ENCODE measurements at regions of chr17 and their contacts with region 1.

Region 1: DNA sequence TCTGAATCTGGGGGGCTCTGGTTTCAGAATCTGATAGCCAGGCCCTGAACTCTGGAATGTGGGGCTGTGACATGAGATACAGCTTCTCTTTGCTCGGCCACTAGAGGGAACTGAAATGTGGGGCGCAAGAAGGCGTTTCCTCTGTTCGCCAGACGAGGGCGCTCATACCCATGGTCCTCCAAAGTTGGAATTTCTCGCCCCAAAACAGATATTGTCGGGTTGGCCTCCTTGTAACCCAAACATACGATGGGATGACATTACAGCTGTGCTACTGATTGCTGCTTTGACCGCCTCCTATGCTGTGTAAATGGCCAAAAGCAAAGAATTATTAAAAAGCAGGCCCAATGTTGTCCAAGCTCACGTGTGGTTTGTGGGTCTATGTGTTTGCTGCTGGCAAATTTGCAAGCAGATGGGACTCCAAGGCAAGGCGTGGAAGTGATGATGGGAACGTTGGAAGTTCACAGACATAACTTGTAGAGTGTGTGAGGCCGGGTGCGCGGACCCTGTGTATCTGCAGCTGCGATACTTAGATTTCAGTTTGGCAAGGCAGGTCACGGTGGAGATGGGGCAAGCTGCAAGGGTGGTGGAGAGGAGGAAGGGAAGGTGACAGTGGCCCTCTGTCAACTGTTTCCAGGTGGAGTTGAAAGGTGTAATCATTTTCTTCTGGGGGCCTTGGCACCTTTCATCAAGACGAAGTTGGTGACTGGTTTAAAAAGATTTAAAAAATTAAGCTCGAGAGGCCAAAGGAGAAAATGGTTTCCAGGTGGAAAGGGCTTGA is 13.0 kb upstream of the MSI2 start:
- DNase-seq: peak; percentile 59
- ATAC-seq: peak; percentile 84
- H3K4me3 Mint-ChIP-seq: no peak overlapping the region
- H3K27ac Mint-ChIP-seq: peak overlapping the region; percentile 30
- H3K4me1 Mint-ChIP-seq: no peaks in the 10 kb centered on the region
- H3K27me3 Mint-ChIP-seq: peaks cover 6% of the 10 kb centered on the region
- CTCF ChIP-seq: peak; percentile 89

Region 2: DNA sequence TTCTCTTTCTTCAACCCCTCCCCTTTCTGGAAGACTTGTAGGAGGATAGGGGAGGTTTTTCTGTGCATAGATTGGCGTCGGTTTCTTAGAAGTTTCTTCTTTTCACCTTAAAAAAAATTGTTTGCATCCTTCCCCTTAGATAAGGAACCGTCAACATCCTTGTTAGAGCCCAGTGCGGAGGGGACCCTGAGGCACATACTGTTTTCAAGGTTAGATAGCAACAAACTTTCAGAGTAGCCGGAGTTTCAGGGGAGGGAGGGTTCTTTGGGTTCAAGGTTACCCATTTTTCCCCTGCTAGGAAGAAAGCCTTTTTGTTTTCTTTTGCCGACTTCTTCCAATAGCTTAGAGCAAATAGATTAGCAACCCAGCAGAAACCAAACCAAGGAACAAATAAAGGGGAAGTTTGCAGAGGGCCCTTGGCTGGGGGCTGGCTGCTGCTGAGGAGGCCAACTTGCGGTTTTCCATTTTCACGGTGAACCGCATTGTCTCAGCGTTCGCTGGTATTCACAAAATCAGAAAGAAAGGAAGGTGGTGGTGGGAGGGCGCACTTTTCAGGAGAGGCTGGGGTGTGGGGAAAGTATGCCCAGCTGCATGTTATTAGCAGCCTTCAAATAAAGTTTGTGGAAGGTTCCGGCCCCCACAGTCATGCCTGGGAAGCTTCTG is 41.8 kb after region 1 on chr17:
- CTCF ChIA-PET with region 1: interaction called, 4 read pairs
- POLR2A ChIA-PET with region 1: no interaction called
- intact Hi-C with region 1: loop called (anchors 1 kb)
- DNase-seq: peak; percentile 38
- ATAC-seq: peak; percentile 89
- H3K4me3 Mint-ChIP-seq: peak overlapping the region; percentile 79
- H3K27ac Mint-ChIP-seq: peak overlapping the region; percentile 74
- H3K4me1 Mint-ChIP-seq: peaks cover 43% of the 10 kb centered on the region
- H3K27me3 Mint-ChIP-seq: no peaks in the 10 kb centered on the region
- CTCF ChIP-seq: no peak

Region 3: DNA sequence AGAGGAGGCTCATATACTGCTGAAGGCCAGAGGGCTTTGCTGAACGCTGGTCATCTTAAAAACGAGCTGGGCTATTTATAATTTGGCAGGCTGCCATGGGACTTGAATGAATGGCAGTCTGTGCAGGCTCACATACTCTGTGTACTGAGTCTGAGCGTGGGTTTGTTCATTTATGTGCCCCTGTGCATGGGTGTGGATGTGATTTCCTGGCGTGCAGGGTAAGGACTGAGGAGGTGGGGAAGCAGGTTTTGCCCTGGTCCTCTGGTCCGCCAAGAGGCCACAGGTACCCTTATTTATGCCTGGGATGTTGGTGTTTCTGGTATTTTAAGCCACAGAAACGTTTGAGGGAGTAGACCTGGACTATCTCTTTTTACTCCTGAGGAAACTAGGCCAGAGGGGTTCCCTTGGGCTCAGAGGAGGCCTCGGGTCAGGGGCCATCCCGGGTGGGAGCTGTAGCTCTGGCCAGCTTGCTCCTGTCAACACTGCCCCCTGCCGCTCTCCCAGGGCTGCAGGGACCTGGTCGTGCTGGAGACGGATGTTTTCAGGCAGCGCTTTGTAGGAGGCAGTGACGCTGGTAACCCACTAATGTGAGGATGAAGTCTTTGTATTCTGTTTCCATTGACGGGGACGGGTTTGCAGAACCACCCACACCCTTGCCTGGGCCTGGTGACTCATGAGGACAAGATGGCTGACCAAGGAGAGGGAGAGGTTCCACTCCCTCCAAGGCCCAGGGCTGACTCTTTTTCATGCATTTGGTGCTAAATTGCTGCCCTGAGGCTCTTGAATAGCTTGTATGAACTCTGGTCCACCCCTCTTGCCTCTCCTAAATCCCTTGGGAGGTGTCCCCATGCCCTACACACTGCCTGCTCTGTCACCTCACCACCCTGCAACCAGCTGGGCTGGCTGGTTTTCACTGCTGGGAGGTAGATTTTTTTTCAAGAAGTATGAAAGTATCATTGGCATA is 197.4 kb after region 1 on chr17:
- CTCF ChIA-PET with region 1: interaction called, 15 read pairs
- POLR2A ChIA-PET with region 1: interaction called, 3 read pairs
- intact Hi-C with region 1: loop called (anchors 5 kb)
- DNase-seq: no peak
- ATAC-seq: peak; percentile 74
- H3K4me3 Mint-ChIP-seq: peak overlapping the region; percentile 32
- H3K27ac Mint-ChIP-seq: peak overlapping the region; percentile 81
- H3K4me1 Mint-ChIP-seq: peaks cover 91% of the 10 kb centered on the region
- H3K27me3 Mint-ChIP-seq: no peaks in the 10 kb centered on the region
- CTCF ChIP-seq: no peak

Region 4: GRCh38 chr17:57671667-57672632 is 428.6 kb after region 1 on chr17:
- CTCF ChIA-PET with region 1: interaction called, 114 read pairs
- POLR2A ChIA-PET with region 1: interaction called, 7 read pairs
- intact Hi-C with region 1: loop called (anchors 1 kb)
- DNase-seq: peak; percentile 56
- ATAC-seq: peak; percentile 91
- H3K4me3 Mint-ChIP-seq: no peak overlapping the region
- H3K27ac Mint-ChIP-seq: no peak overlapping the region
- H3K4me1 Mint-ChIP-seq: peaks cover 8% of the 10 kb centered on the region
- H3K27me3 Mint-ChIP-seq: no peaks in the 10 kb centered on the region
- CTCF ChIP-seq: peak; percentile 88

Region 5: DNA sequence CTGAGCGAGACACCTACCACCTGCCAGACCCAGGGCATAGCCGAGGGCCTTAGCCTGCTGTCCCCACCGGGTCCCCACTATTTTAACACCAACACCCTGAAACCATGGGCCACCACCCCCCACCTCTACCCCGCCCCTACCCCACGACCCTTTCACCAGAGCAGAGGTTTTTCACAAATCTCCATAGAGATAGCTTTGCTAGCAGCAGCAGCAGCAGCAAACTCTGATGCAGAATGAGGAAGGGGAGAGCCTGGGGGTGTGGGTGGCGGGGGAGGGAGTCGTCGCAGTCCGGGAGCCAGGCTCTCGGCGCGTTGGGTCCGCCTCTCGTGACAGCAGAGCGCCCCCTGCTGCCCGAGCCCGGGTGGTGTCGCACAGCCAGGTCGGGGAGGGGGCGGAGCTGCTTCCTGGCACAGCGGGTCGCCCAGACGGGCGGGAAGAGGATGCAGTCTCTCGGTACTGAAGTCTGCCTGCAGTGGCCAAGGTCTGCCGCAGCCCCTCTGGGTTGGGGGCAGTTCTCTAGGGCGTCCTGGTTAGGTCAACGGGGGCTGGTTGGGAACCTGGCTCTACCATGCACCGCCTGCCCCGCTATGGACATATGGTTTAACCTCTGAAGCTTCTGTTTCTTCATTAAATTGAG is 539.9 kb after region 1 on chr17:
- CTCF ChIA-PET with region 1: interaction called, 16 read pairs
- POLR2A ChIA-PET with region 1: interaction called, 3 read pairs
- intact Hi-C with region 1: no loop called
- DNase-seq: peak; percentile 65
- ATAC-seq: peak; percentile 81
- H3K4me3 Mint-ChIP-seq: no peak overlapping the region
- H3K27ac Mint-ChIP-seq: no peak overlapping the region
- H3K4me1 Mint-ChIP-seq: peaks cover 3% of the 10 kb centered on the region
- H3K27me3 Mint-ChIP-seq: peaks cover 5% of the 10 kb centered on the region
- CTCF ChIP-seq: no peak

Measured in activated B cell treated with CpG ODN at 0.5 μM for 24 hours (primary cell).